Right ventricle myocardium inferior (tissue), 1 donor: ENCODE measurements at regions of chr11 and their contacts with region 1.

Region 1: DNA sequence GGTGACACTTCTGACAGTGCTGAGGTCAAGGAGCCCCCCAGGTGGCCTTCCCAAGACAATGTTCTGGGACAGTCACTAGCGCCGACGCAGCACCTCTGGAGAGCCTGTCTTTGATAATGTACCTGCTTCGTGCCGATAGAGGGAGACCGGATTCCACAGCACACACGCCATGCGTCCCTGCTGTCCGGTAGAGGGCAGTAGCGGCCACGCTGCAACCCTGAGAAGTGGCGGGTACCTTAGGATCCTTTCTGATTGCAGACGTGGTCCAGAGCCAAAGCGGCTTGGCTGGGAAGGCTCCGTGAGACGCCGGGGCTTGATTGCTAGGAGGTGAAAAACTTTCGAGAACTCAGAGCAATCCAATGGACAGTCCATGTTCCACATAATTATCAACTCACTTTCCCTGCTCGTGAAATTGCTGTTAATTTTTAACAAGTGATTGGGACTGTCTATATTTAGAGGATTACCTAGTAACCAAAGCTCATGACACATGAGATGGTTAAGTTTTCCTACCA is 11.4 kb upstream of the BARX2 start:
- DNase-seq: peak; percentile 85
- ATAC-seq: peak; percentile 91

Region 2: DNA sequence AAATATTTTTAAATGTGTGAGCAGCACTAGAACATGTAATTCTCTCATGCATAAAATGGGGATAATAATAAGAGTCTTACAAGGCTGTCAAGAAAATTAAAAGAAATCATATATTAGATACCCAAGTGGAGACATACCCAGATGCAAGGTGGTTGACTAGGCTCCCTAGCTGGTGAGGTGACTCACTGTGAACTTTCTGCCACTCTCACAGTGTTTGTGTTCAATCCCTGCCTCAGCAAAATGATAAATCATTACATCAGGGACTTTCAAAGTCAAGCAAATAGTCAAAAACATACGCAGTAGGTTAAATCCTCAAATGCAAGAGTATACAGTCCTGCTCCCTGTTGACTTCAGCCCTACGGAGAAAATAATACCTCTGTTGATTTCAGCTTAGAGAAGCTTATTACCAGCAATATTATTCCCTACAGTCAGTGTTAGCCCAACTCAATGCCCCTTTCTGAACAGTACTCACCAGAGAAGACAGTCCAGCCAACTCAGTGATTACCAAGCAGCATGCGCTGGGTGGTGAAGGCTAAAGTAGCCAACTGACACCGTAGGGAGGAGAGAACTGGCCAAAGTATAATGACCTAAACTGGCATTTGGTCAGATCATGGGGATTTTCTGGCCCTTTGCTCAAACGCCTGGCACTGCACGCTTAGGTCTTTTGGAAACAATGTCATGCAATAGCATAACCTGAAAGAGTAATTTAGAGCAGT is 61.7 kb before region 1 on chr11:
- intact Hi-C with region 1: no loop called
- DNase-seq: no peak
- ATAC-seq: no peak

Region 3: DNA sequence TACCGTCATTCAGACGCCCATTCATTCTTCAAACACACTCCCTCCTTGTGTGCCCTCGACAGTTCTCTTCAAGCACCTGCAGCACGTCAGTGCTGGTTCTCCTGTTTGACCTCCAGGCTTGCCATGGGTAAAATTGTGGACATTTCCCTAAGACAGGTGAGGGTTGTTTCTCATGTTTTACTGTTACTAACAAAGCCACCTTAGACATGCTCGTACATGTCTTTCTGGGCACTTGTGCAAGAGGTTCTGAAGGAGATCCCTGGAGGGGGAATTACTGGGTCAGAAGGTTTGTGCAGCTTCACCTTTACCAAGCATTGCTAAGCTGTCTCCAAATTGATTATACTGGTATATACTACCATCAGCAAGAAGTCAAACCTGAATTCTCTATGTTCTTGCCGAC is 261.7 kb after region 1 on chr11:
- intact Hi-C with region 1: no loop called
- DNase-seq: no peak
- ATAC-seq: no peak

Region 4: GRCh38 chr11:129695575-129696308 is 331.5 kb after region 1 on chr11:
- intact Hi-C with region 1: loop called (anchors 10 kb)
- DNase-seq: no peak
- ATAC-seq: peak; percentile 53

Region 5: DNA sequence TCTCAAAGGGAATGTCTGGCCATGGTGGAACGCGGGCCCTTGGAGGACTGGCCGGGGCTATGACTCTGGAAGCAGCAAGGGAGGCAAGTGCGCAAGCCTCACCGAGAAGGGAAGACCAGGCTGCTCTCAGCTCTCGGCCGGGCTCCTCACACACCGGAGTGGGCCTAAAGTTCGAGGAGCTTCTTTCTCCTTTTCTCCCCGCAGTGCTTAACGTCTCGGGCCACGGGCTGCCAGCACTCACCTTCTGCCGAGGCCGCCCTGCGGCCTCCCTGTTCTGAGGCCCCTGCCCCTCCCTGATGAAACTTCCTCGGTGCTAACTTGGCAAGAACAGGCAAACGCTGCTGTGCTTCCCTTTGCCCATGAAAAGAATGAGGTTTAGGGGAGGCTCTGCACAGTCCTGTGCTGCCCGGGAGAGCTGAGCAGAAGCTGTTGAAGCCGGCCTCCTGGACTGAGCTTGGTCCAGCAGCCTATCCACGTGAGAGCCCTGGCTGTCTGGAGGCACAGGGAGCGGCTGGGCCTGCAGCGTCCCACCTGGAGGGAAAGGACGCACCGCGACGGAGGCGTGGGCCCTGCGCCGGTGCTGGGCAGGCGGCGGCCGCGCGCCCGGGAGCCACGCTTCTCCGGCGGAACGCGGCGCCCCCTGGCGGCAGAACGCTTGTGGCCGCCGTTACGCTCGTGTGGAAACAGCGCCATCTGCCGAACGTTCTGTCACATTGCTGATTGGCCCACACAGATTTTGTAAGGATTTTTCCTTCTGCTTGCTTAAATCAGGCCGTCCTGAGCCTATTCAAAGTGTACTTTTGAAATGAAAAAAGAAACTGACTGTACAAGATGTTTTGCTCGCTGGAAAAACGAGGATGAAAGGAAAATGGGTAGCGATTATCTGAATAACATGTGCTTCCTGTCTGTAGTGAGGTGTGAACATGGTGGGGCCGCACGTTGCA is 386.4 kb after region 1 on chr11:
- intact Hi-C with region 1: loop called (anchors 2 kb)
- DNase-seq: peak; percentile 86
- ATAC-seq: peak; percentile 80